Astrocyte of the cerebellum (primary cell): ENCODE measurements at regions of chr20 and their contacts with region 1.

Region 1: DNA sequence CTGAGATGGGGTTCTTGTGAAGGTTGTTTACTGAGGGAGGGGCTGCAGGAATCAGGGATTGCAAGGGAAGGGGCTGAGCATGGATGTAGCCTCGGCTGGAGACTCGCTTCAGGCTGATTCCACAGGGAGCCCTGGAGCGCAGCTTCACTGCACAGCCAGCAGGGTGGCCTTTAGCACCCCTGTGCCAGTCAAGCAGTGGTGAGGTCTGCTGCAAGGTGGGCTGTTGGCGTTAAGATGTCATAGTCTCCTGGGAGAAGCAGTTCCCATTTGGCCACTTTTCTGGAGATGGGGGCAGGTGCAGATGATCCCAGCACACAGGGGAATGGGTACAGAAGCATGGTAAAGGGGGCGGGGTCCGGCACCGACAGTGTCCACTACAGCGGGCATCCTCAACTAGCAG is 126.3 kb downstream of the TOX2 start:
- DNase-seq: no peak
- H3K4me3 ChIP-seq: no peak overlapping the region
- CTCF ChIP-seq: no peak

Region 2: GRCh38 chr20:43969501-43970182 is 71.4 kb before region 1 on chr20:
- in situ Hi-C with region 1: loop called (anchors 5 kb)
- DNase-seq: no peak
- H3K4me3 ChIP-seq: no peak overlapping the region
- CTCF ChIP-seq: no peak

Region 3: GRCh38 chr20:43994486-43995100 is 46.4 kb before region 1 on chr20:
- in situ Hi-C with region 1: no loop called
- DNase-seq: no peak
- H3K4me3 ChIP-seq: no peak overlapping the region
- CTCF ChIP-seq: no peak

Region 4: DNA sequence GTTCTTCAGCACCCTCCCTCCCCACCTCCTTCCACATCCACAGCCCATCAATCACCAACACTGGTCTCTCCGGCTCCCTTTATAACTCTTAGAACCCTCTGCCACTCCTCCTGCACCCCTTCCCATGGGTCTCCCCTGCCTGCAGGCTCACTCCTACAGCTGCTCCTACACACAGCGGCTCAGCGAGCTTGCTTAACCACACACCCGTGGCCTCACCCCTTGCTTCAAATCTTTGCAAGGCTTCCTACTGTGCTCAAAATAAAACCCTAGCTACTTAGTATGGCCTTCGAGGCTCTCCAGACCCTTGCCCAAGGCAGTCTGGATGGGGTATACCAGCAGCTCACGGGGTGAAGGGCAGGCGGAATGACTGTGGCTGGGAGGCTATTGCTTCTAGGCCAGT is 82.2 kb after region 1 on chr20:
- in situ Hi-C with region 1: no loop called
- DNase-seq: no peak
- H3K4me3 ChIP-seq: no peak overlapping the region
- CTCF ChIP-seq: no peak

Region 5: GRCh38 chr20:44765652-44766347 is 724.8 kb after region 1 on chr20:
- in situ Hi-C with region 1: no loop called
- DNase-seq: no peak
- H3K4me3 ChIP-seq: no peak overlapping the region
- CTCF ChIP-seq: no peak